Vagina (tissue), 2 donors: ENCODE measurements at regions of chr1 and their contacts with region 1.

Region 1: GRCh38 chr1:3069491-3070303 is 694 bp downstream of the PRDM16 start:
- DNase-seq: no peak
- H3K4me3 ChIP-seq: peak overlapping the region; percentile 61 to 76
- H3K27ac ChIP-seq: peak overlapping the region; percentile 47
- H3K4me1 ChIP-seq: peaks cover 40% of the 10 kb centered on the region
- H3K27me3 ChIP-seq: peaks cover 32% of the 10 kb centered on the region
- CTCF ChIP-seq: no peak
- POLR2A ChIP-seq: no peak

Region 2: GRCh38 chr1:3126756-3127597 is 57.3 kb after region 1 on chr1:
- intact Hi-C with region 1: no loop called
- DNase-seq: no peak
- H3K4me3 ChIP-seq: no peak overlapping the region
- H3K27ac ChIP-seq: peak overlapping the region; percentile 48
- H3K4me1 ChIP-seq: peaks cover 21% of the 10 kb centered on the region
- H3K27me3 ChIP-seq: no peaks in the 10 kb centered on the region
- CTCF ChIP-seq: no peak
- POLR2A ChIP-seq: no peak

Region 3: GRCh38 chr1:3275471-3276340 is 206.0 kb after region 1 on chr1:
- intact Hi-C with region 1: loop called (anchors 10 kb)
- DNase-seq: no peak
- H3K4me3 ChIP-seq: no peak overlapping the region
- H3K27ac ChIP-seq: no peak overlapping the region
- H3K4me1 ChIP-seq: peaks cover 7% of the 10 kb centered on the region
- H3K27me3 ChIP-seq: no peaks in the 10 kb centered on the region
- CTCF ChIP-seq: no peak
- POLR2A ChIP-seq: no peak

Region 4: DNA sequence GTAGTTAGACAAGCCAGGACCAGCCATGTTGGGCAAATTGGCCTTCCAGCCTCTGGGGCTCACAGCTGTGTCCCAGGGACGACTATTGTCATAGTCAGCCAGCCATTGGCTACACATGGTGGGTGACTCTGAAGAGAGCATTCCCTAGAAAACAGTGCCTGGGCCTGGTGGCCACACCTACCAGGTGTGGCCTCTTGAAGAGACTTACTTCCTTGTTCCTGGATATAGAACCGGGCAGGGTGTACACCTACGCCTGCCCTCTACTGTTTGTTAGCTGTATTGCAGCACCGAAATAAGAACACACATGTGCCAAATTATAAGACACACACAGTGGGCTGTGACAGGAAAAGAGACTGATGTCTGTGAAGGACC is 250.2 kb after region 1 on chr1:
- intact Hi-C with region 1: loop called (anchors 10 kb)
- DNase-seq: no peak
- H3K4me3 ChIP-seq: no peak overlapping the region
- H3K27ac ChIP-seq: no peak overlapping the region
- H3K4me1 ChIP-seq: peaks cover 18% of the 10 kb centered on the region
- H3K27me3 ChIP-seq: no peaks in the 10 kb centered on the region
- CTCF ChIP-seq: peak in 1 of 3 experiments; percentile 32
- POLR2A ChIP-seq: no peak

Region 5: GRCh38 chr1:3408751-3409266 is 339.1 kb after region 1 on chr1:
- intact Hi-C with region 1: loop called (anchors 2 kb)
- DNase-seq: no peak
- H3K4me3 ChIP-seq: no peak overlapping the region
- H3K27ac ChIP-seq: no peak overlapping the region
- H3K4me1 ChIP-seq: no peaks in the 10 kb centered on the region
- H3K27me3 ChIP-seq: no peaks in the 10 kb centered on the region
- CTCF ChIP-seq: no peak
- POLR2A ChIP-seq: no peak